PC-3 (cell line): ENCODE measurements at regions of chr12 and their contacts with region 1.

Region 1: DNA sequence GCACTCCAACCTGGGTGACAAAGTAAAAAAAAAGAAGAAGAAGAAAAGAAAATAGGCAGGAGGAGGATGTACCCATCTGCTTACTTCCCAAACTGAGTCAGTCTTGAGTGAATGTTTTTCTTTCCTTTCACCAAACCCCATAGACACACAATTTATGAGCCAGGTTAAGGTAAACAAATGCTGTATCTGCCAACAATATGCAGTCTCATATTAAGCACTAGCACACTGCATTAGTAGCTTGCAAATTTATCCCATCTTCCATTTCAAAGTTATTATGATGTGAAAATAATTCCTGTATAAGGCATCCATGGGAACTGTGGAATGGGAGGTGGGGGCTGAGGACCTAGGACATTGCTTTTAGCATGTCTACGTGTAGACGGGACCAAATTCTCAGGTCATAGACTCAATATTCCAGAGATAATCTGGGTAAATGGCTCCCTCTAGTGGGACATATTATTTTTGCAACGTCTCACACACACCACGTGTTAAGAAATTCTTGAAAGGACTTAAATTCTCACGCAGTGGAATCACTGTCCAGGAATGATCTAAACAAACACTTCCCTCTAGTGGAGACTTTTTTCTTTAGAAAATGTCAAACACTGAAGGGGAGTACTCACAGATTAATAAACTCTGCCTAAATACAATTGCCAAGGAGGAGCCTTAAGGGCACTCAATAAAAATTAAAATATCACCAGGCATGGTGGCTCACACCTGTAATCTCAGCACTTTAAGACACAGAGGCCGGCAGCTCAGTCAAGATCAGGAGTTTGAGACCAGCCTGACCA is 17.1 kb upstream of the OR10P1 start:
- DNase-seq: peak; percentile 99
- ATAC-seq: peak; percentile 95
- H3K4me3 ChIP-seq: no peak overlapping the region
- H3K27ac ChIP-seq: no peak overlapping the region
- H3K4me1 ChIP-seq: no peaks in the 10 kb centered on the region
- H3K27me3 ChIP-seq: peaks cover 36% of the 10 kb centered on the region
- CTCF ChIP-seq: peak; percentile 95

Region 2: GRCh38 chr12:55188974-55189556 is 430.5 kb before region 1 on chr12:
- CTCF ChIA-PET with region 1: interaction called, 4 read pairs
- POLR2A ChIA-PET with region 1: no interaction called
- intact Hi-C with region 1: loop called (anchors 1 kb)
- DNase-seq: peak; percentile 89
- ATAC-seq: peak; percentile 82
- H3K4me3 ChIP-seq: no peak overlapping the region
- H3K27ac ChIP-seq: no peak overlapping the region
- H3K4me1 ChIP-seq: no peaks in the 10 kb centered on the region
- H3K27me3 ChIP-seq: peaks cover 28% of the 10 kb centered on the region
- CTCF ChIP-seq: peak; percentile 83

Region 3: GRCh38 chr12:55446326-55446725 is 173.2 kb before region 1 on chr12:
- CTCF ChIA-PET with region 1: no interaction called
- POLR2A ChIA-PET with region 1: no interaction called
- intact Hi-C with region 1: loop called (anchors 1 kb)
- DNase-seq: peak; percentile 11
- ATAC-seq: no peak
- H3K4me3 ChIP-seq: no peak overlapping the region
- H3K27ac ChIP-seq: no peak overlapping the region
- H3K4me1 ChIP-seq: no peaks in the 10 kb centered on the region
- H3K27me3 ChIP-seq: peaks cover 38% of the 10 kb centered on the region; the same call in 1 of the 2 replicates
- CTCF ChIP-seq: peak; percentile 33; the same call in 1 of the 2 replicates